OCI-LY7 (cell line): ENCODE measurements at regions of chr5 and their contacts with region 1.

Region 1: DNA sequence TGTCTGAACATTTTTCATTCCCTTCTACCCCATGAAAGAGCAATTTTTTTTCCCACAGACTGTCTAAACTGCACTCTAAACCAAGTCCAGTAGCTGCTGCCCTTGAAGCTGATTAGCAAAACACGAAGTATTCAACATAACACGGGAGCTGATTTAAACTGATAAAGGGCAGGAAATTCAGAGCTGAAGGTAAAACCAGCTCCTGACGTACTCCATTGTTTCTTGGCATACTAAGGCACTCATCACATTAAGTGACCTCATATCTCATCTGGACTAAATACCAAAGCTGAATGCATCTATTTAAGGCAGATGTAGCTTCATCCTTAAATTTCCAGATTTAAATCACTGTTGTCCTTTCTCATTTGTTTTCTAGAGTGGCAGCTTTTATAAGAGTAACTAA is 12.0 kb downstream of the GDF9 start:
- DNase-seq: no peak
- H3K4me3 ChIP-seq: no peak overlapping the region
- H3K27ac ChIP-seq: no peak overlapping the region
- H3K4me1 ChIP-seq: no peaks in the 10 kb centered on the region
- CTCF ChIP-seq: no peak

Region 2: DNA sequence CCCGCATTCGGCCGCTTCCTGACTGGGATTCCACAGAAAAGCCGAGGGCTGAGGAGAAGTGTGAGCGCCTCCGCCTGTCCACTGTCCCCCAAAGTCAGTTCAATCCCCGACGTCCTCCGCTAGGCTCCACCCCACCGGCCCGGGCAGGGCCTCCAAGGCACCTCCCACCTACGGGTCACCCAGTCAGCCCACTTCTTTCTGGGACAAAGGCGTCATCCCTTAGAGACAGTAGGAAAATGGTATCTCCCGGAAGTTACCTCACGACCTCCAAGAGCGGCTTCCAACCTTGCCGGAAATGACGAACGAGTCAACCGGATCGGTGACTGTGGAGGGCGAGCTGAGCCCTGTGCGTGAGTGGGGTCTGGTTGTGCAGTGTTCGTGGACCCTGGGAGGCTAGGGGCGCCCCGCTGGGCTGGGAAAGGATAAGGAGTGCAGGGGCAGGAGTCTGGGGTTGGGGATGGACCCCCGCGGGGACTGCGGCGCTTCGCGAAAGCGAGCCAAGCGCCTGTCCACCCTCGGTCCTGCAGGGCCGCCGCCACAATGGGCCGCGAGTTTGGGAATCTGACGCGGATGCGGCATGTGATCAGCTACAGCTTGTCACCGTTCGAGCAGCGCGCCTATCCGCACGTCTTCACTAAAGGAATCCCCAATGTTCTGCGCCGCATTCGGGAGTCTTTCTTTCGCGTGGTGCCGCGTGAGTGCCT is 12.2 kb after region 1 on chr5 and contains the starts of genes GDF9 and UQCRQ:
- CTCF ChIA-PET with region 1: interaction called, 4 read pairs
- POLR2A ChIA-PET with region 1: interaction called, 15 read pairs
- intact Hi-C with region 1: no loop called
- DNase-seq: peak; percentile 100
- H3K4me3 ChIP-seq: peak within 1 kb of the TSS; percentile 94
- H3K27ac ChIP-seq: peak within 1 kb of the TSS; percentile 32
- H3K4me1 ChIP-seq: peaks cover 17% of the 10 kb centered on the region
- CTCF ChIP-seq: peak; percentile 33; the same call in 1 of the 2 replicates
- total RNA-seq, gene GDF9: 0.44 and 0.66 TPM in 2 replicates
- total RNA-seq, gene UQCRQ: 140 and 158 TPM in 2 replicates